HAP-1 (cell line): ENCODE measurements at regions of chr11 and their contacts with region 1.

Region 1: DNA sequence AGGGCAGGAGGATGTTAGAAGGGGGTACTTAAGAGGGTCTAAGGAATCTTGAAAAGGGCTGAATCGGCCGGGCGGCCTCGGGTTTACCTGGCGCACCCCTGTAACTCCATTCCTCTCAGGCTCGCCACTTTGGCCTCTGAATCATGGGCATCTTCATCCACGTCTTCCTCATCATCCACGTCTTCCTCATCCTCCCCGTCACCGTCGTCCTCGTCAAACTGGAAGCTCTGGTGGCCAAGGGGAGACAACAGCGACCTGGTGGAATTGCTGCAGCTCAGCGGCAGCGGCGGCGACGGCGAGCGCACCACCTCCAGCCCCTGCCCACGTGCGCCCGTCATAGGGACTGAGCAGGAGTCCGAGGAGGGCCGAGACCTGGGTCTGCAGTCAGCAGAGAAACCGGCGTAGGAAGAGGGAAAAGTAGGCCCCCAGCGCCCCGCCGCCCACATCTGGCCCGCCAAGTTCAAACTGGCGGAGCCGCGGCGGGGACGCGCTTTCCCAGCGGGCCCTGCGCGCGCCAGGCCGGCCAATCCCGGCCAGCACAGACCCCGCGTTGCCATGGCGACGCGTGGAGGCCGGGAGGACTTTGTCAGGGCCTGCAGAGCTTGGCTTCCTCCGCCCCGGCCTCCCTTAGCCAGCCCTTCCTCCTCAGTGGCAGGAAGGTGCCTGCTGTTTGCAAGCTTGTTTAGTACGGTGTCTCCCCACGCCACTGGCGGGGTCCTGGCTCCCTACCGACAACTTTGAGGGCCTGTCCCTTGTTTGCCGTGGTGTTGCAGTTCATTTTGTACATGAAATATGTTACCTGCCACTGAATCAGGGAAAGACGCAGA is at the start of gene CCDC34:
- DNase-seq: peak; percentile 88 to 94
- H3K4me3 ChIP-seq: peak within 1 kb of the TSS; percentile 62
- H3K4me1 ChIP-seq: peaks cover 31% of the 10 kb centered on the region
- H3K27me3 ChIP-seq: no peaks in the 10 kb centered on the region

Region 2: DNA sequence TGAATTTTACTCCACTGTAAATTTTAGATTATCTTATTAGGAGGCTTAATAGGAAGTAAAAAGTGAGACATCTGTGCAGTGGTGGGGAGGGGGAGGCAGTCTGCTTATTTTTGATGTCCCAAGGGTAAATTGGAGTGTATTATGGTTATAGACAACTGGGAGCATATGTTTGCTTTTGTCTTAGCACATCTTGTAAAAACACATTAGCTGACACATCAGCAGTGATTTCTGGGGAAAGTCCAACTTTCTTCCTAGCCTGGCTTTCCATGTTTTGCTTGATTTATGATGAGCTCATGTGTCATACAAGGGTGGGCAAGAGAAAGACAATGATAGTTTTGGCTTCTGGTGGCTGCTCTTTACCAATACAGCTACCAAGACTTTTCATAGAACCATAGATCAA is 1027.1 kb before region 1 on chr11:
- in situ Hi-C with region 1: no loop called
- DNase-seq: no peak
- H3K4me3 ChIP-seq: no peak overlapping the region
- H3K4me1 ChIP-seq: no peaks in the 10 kb centered on the region; the same call in 1 of the 2 replicates
- H3K27me3 ChIP-seq: peaks cover 7% of the 10 kb centered on the region

Region 3: GRCh38 chr11:27012234-27012921 is 350.6 kb before region 1 on chr11:
- in situ Hi-C with region 1: no loop called
- DNase-seq: no peak
- H3K4me3 ChIP-seq: no peak overlapping the region
- H3K4me1 ChIP-seq: no peaks in the 10 kb centered on the region
- H3K27me3 ChIP-seq: no peaks in the 10 kb centered on the region

Region 4: GRCh38 chr11:27472398-27473016 is 109.5 kb after region 1 on chr11 and contains the start of gene LGR4:
- in situ Hi-C with region 1: loop called (anchors 25 kb)
- DNase-seq: peak; percentile 98 to 99
- H3K4me3 ChIP-seq: peak within 1 kb of the TSS; percentile 65
- H3K4me1 ChIP-seq: peaks cover 19% of the 10 kb centered on the region
- H3K27me3 ChIP-seq: no peaks in the 10 kb centered on the region